Endothelial cell of umbilical vein (primary cell): ENCODE measurements at regions of chr4 and their contacts with region 1.

Region 1: DNA sequence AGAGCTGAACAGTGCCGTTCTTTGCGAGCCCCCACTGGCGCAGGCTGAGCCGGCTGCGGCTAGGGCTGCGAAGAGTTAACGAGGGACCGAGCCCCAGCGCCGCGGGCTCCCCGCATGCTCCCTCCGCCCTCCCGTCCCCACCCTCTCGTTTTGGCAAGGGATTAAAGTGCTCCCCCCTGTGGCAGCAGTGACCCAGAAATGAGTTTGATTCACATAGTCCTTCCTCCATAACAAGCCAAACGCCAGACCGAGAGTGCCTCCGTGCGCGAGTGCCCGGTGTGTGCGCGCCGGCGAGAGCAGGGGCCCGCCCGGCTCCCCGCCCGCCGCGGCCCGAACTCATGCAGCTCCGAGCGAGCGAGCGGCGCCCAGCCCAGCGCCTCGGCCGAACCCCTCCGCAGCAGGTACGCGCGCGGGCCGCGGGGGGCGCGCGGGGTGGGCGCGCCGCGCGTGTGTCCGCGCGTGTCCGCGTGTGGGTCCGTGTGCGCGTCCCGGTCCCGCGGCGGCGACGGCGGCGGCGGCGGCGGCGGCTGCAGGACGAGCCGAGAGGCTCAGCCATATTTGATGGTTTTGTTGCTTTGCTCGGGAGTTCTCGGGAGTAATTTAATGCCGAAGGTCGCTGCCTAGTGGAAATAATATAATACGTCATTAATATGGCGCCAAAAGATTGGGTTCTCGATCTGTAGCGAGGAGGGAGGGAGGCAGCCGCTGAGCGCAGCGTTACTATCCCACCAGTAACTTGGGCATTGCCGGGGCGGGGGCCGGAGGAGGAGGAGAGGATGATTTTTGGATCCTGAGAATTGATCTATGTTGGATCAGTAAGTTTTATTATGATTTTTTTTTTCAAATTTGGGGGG is at the start of gene JADE1:
- DNase-seq: peak; percentile 95
- H3K4me3 ChIP-seq: peak within 1 kb of the TSS; percentile 77 to 98 (median 94)
- H3K27ac ChIP-seq: peak within 1 kb of the TSS; percentile 93
- H3K4me1 ChIP-seq: peaks cover 7% of the 10 kb centered on the region
- H3K27me3 ChIP-seq: no peaks in the 10 kb centered on the region
- CTCF ChIP-seq: peak; percentile 65 to 72
- POLR2A ChIP-seq: no peak
- total RNA-seq, gene JADE1: 39.2 and 45.6 TPM in 2 replicates

Region 2: DNA sequence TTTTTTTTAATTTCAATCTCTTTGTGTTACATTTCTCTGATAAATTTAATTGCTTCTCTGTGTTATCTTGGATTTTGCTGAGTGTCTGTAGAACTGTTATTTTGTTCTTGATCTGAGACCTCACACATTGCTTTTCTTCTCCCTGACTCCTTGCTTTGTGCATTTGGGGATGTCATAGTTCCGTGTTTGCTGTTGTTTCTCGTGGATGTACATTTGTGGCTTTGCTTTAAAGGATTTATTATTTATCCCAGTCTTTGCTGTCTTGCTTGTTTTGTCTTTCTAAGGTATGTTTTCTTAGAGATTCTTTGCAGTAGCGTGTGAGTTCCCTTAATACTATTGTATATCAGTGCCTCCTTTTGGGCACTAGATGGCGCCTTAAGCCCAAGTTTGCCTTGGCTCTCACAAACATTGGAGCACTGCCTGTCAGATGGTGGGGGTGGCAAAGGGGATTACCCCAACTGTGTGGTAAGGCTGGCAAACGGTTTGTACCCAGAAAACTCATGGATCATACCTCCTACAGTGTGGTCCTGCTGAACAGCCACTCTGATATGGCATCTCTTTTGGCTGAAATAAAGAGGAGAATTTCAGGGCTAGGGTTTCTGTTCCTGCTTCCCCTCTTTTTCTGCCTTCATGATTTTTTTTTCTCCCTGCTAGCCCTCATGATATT is 618.5 kb before region 1 on chr4:
- CTCF ChIA-PET with region 1: interaction called, 5 read pairs
- POLR2A ChIA-PET with region 1: no interaction called
- dilution Hi-C with region 1: no loop called
- intact Hi-C with region 1: loop called (anchors 1 kb)
- DNase-seq: peak; percentile 76
- H3K4me3 ChIP-seq: no peak overlapping the region
- H3K27ac ChIP-seq: no peak overlapping the region
- H3K4me1 ChIP-seq: no peaks in the 10 kb centered on the region
- H3K27me3 ChIP-seq: no peaks in the 10 kb centered on the region
- CTCF ChIP-seq: peak; percentile 71 to 75
- POLR2A ChIP-seq: no peak

Region 3: GRCh38 chr4:128354205-128354821 is 455.4 kb before region 1 on chr4:
- CTCF ChIA-PET with region 1: no interaction called
- POLR2A ChIA-PET with region 1: no interaction called
- dilution Hi-C with region 1: no loop called
- intact Hi-C with region 1: loop called (anchors 1 kb)
- DNase-seq: peak; percentile 92
- H3K4me3 ChIP-seq: no peak overlapping the region
- H3K27ac ChIP-seq: peak overlapping the region; percentile 86
- H3K4me1 ChIP-seq: peaks cover 34% of the 10 kb centered on the region
- H3K27me3 ChIP-seq: no peaks in the 10 kb centered on the region
- CTCF ChIP-seq: no peak
- POLR2A ChIP-seq: no peak

Region 4: GRCh38 chr4:128427832-128428366 is 381.8 kb before region 1 on chr4:
- CTCF ChIA-PET with region 1: interaction called, 15 read pairs
- POLR2A ChIA-PET with region 1: no interaction called
- dilution Hi-C with region 1: no loop called
- intact Hi-C with region 1: no loop called
- DNase-seq: peak; percentile 48
- H3K4me3 ChIP-seq: no peak overlapping the region
- H3K27ac ChIP-seq: no peak overlapping the region
- H3K4me1 ChIP-seq: no peaks in the 10 kb centered on the region
- H3K27me3 ChIP-seq: no peaks in the 10 kb centered on the region
- CTCF ChIP-seq: peak; percentile 12 to 30
- POLR2A ChIP-seq: no peak

Region 5: GRCh38 chr4:128565565-128566186 is 244.0 kb before region 1 on chr4:
- CTCF ChIA-PET with region 1: interaction called, 4 read pairs
- POLR2A ChIA-PET with region 1: no interaction called
- dilution Hi-C with region 1: no loop called
- intact Hi-C with region 1: loop called (anchors 1 kb)
- DNase-seq: peak; percentile 51
- H3K4me3 ChIP-seq: no peak overlapping the region
- H3K27ac ChIP-seq: no peak overlapping the region
- H3K4me1 ChIP-seq: peaks cover 17% of the 10 kb centered on the region
- H3K27me3 ChIP-seq: no peaks in the 10 kb centered on the region
- CTCF ChIP-seq: peak; percentile 56 to 68
- POLR2A ChIP-seq: no peak

Region 6: DNA sequence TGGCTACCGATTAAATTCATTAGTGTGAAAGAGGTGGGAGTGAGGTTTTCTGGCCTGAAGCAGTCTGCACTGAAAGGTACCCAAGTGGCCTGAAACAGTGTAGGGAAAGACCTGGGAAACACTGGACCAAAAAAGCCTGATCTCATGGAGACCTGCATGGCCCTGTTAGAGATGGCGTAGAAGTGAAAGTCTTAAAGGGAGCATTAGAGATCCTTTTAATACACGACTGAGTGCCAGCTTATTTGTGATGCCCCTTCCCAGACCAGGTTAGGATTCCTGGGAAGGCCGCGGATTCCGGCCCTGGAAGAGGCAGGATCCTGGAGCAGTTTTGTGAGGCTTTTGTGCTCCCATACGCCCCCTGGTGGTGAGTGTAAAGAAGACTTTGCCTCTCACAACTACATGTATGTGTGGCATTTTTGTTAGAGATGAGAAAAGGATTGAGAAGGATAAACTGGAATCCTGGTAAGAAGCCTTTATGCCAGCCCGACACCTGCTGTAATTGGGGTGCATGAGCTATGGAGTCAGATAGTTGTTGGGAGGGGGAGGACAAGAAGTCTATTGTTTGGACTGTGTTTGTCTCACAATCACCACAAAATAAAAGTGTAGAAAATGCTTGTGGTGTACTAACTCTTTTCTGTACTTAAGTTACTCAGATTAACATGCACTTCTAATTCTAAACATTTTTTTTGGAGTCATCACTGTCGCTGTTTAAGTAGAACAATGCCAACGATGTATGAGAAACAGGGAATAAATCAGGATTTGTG is 53.8 kb after region 1 on chr4:
- CTCF ChIA-PET with region 1: interaction called, 15 read pairs
- POLR2A ChIA-PET with region 1: no interaction called
- dilution Hi-C with region 1: no loop called
- intact Hi-C with region 1: loop called (anchors 1 kb)
- DNase-seq: peak; percentile 81
- H3K4me3 ChIP-seq: no peak overlapping the region
- H3K27ac ChIP-seq: no peak overlapping the region
- H3K4me1 ChIP-seq: peaks cover 11% of the 10 kb centered on the region
- H3K27me3 ChIP-seq: no peaks in the 10 kb centered on the region
- CTCF ChIP-seq: peak; percentile 78 to 83
- POLR2A ChIP-seq: no peak

Region 7: DNA sequence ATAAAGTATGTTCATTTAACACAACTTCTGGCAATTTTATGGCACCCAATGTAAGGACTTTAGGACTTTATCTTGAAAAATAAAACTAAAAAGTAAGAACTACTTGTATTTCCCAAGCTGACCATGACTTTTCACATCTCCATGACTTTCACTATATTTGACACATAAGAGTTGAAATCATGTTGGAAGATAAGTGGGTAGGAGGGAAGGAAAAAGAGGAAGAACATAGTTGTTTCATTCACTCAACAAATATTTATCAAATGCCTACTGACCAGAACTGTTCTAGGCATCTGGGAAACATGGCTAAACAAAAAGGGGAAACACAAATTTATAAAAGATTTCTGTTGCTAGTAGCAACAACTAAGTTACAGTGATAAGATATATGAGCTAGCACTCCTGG is 267.6 kb after region 1 on chr4:
- CTCF ChIA-PET with region 1: no interaction called
- POLR2A ChIA-PET with region 1: no interaction called
- dilution Hi-C with region 1: no loop called
- intact Hi-C with region 1: no loop called
- DNase-seq: no peak
- H3K4me3 ChIP-seq: no peak overlapping the region
- H3K27ac ChIP-seq: no peak overlapping the region
- H3K4me1 ChIP-seq: no peaks in the 10 kb centered on the region
- H3K27me3 ChIP-seq: no peaks in the 10 kb centered on the region
- CTCF ChIP-seq: no peak
- POLR2A ChIP-seq: no peak